ENCODE measurements at regions of chr5 and their contacts with region 1.

Region 1: DNA sequence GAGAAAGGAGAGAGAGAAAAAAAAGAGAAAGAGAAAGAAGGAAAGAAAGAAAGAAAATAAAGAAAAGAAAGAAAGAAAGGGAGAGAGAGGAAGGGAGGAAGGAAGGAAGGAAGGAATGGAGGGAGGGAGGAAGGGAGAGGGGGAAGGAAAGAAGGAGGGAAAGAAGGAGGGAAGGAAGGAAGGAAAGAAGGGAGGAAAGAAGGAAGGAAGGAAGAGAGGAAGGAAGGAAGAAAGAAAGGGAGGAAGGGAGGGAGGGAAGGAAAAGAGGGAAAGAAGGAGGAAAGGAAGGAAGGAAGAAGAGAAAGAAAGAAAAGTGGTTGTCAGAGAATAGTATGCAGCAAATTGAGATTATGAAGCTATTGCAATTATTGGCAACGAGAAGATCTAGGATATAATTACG is 49.9 kb upstream of the NIPBL start:
- DNase-seq: no peak
- ATAC-seq: no peak
- H3K4me3 ChIP-seq: no peak overlapping the region
- H3K27ac ChIP-seq: no peak overlapping the region
- H3K4me1 ChIP-seq: no peaks in the 10 kb centered on the region
- H3K27me3 ChIP-seq: peaks cover 2% of the 10 kb centered on the region; the same call in 1 of the 2 replicates
- CTCF ChIP-seq: no peak

Region 2: DNA sequence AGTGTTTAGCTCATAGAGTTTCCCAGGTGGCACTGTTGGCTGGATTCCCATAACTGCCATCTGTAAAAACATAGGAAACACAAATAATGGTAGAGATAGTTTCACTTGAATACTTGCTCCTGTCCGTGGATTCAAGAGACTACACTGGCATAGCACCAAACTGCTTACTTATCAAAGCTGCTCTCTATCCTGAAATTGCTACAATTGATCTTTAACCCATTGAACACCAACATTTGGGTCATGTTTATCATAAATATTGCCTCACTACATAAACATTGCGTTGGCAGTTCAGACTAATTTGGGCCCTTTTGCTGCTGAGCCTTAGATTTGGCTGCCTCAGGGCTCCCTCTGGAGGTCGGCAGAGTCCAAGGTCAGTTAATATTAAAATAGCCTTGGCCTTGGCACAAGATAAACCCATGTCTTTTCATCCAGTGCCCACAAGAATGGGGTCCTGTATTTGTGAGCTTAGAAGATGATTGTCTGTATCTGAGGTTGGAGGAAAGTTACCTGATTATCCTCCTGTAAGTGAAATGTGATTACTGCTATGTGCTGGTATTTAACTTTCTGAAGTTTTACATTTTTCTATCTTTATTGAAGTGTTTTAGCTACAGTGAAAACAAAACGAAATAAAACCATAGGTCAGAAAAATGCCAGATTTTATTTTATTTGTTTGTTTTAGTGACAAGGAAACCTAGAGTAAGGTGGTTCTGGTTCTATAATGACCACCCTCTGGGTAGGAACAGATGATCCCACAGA is 520.9 kb before region 1 on chr5:
- CTCF ChIA-PET with region 1: no interaction called
- POLR2A ChIA-PET with region 1: no interaction called
- in situ Hi-C with region 1: no loop called
- intact Hi-C with region 1: no loop called
- DNase-seq: peak; percentile 38
- ATAC-seq: peak; percentile 85
- H3K4me3 ChIP-seq: no peak overlapping the region
- H3K27ac ChIP-seq: no peak overlapping the region
- H3K4me1 ChIP-seq: no peaks in the 10 kb centered on the region; the same call in 1 of the 2 replicates
- H3K27me3 ChIP-seq: no peaks in the 10 kb centered on the region; the same call in none of the 2 replicates
- CTCF ChIP-seq: peak; percentile 87

Region 3: DNA sequence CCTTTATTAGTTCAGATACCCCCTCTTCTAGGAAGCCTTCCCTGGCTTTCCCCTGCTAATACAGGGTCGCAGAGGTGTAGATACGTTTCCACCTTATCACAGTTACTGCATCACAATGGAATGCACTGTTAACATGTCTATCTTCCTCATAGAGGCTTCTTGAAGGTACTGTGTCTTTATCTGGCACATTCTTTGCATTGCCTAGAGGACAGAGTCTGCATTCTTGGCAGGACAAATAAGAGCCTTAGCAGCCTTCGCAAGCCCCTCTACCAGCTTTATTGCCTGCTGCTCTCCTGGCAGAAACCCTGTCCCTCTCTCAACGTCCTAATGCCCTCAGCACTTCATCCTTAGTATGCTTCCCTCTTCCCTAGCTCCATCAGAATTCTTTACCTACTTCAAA is 188.6 kb before region 1 on chr5:
- CTCF ChIA-PET with region 1: no interaction called
- POLR2A ChIA-PET with region 1: no interaction called
- in situ Hi-C with region 1: no loop called
- intact Hi-C with region 1: no loop called
- DNase-seq: no peak
- ATAC-seq: no peak
- H3K4me3 ChIP-seq: no peak overlapping the region
- H3K27ac ChIP-seq: no peak overlapping the region
- H3K4me1 ChIP-seq: no peaks in the 10 kb centered on the region
- H3K27me3 ChIP-seq: peaks cover 10% of the 10 kb centered on the region
- CTCF ChIP-seq: no peak

Region 4: DNA sequence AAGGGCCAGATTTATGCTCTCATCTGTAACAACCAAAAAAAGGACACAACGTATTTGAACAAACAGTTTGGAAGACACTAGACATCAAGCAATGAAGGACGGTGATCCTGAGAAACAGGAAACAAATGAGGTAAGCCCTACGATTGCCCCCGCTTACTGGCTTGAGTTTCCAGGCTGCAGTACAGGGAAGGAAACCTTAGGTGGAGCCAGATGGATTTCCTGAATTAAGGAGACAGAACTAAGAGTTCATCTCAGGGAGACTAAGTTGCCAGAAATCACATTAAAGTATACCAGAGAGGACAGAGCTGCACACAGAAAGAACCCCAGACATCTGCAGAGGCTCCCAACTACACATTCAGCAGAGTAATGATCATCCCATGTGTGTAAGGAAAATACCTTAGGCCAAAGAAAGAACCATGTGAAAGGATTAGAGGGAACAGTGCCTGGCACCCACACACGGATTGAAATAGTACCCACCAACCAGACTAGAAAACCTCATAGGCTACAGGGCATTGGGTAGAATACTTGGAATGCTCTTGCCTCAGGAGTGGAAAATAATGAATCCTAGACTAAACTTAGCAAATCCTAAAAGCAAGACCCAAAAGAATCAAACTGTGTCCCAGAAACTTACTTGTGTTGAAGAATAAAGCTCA is 49.5 kb before region 1 on chr5:
- CTCF ChIA-PET with region 1: interaction called, 10 read pairs
- POLR2A ChIA-PET with region 1: no interaction called
- in situ Hi-C with region 1: no loop called
- intact Hi-C with region 1: no loop called
- DNase-seq: no peak
- ATAC-seq: 0 out of 2 replicates have a peak, but pooled peaks have one; percentile 65
- H3K4me3 ChIP-seq: no peak overlapping the region
- H3K27ac ChIP-seq: no peak overlapping the region
- H3K4me1 ChIP-seq: no peaks in the 10 kb centered on the region
- H3K27me3 ChIP-seq: peaks cover 3% of the 10 kb centered on the region; the same call in 1 of the 2 replicates
- CTCF ChIP-seq: peak; percentile 57